Adrenal gland (tissue), 19 donors: ENCODE measurements at regions of chr6 and their contacts with region 1.

Region 1: GRCh38 chr6:26342106-26343004 is 22.6 kb upstream of the BTN3A2 start:
- DNase-seq: peak in 1 of 7 donors; percentile 24
- H3K4me3 ChIP-seq: no peak overlapping the region
- H3K27ac ChIP-seq: no peak overlapping the region
- H3K4me1 ChIP-seq: no peaks in the 10 kb centered on the region
- H3K27me3 ChIP-seq: no peaks in the 10 kb centered on the region
- CTCF ChIP-seq: no peak
- POLR2A ChIP-seq: no peak

Region 2: DNA sequence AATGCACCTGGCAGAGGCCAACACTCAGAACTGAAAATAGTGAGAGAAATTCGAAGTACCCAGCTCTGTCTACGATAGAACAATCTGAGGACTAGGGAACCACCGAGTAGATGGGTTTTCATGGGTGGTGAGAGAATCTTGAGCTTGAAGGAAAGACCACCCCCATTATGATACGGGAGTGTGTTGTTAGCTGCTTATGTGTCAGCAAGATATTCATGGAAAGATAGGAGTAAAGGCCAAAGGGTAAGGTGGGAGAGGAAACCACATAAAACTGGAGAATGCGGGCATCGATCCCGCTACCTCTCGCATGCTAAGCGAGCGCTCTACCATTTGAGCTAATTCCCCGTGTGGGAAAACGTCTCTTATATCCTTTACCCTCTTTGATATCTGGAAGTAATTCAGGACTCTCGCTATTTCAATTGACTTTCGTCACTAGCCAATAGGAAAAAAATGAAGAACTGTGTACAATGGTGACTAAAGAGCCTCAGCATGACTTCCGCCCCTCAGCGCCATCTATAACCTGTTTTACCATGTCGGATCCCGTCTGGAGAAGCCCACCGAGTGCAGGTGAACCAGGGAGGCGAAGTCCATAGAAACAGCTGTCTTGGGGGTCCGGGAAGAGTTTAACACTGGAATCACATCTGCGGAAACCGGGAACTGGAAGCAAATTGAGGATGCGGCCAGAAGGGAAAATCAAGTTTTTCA is 229.4 kb after region 1 on chr6:
- intact Hi-C with region 1: loop called in 1 of 2 experiments (anchors 10 kb)
- DNase-seq: peak; percentile 57 to 85 (median 72)
- H3K4me3 ChIP-seq: peak overlapping the region in 3 of 4 donors; percentile 18 to 55 (median 23)
- H3K27ac ChIP-seq: peak overlapping the region; percentile 44 to 86 (median 72)
- H3K4me1 ChIP-seq: no peaks in the 10 kb centered on the region
- H3K27me3 ChIP-seq: peaks cover 3% of the 10 kb centered on the region
- CTCF ChIP-seq: no peak
- POLR2A ChIP-seq: peak in 1 of 2 donors; percentile 16

Region 3: GRCh38 chr6:26596579-26597388 is 254.4 kb after region 1 on chr6 and contains the start of gene ABT1:
- intact Hi-C with region 1: loop called in 1 of 2 experiments (anchors 5 kb)
- DNase-seq: peak; percentile 97 to 99 (median 98)
- H3K4me3 ChIP-seq: peak within 1 kb of the TSS; percentile 56 to 76 (median 64)
- H3K27ac ChIP-seq: peak within 1 kb of the TSS; percentile 29 to 88 (median 86)
- H3K4me1 ChIP-seq: peaks cover 10 to 16% of the 10 kb centered on the region in 2 donors
- H3K27me3 ChIP-seq: peaks cover 20% of the 10 kb centered on the region
- CTCF ChIP-seq: no peak
- POLR2A ChIP-seq: peak; percentile 35 to 81
- total RNA-seq, gene ABT1: 11.4 to 21.6 (median 12.6) TPM